ENCODE measurements at regions of chr12 and their contacts with region 1.

Region 1: DNA sequence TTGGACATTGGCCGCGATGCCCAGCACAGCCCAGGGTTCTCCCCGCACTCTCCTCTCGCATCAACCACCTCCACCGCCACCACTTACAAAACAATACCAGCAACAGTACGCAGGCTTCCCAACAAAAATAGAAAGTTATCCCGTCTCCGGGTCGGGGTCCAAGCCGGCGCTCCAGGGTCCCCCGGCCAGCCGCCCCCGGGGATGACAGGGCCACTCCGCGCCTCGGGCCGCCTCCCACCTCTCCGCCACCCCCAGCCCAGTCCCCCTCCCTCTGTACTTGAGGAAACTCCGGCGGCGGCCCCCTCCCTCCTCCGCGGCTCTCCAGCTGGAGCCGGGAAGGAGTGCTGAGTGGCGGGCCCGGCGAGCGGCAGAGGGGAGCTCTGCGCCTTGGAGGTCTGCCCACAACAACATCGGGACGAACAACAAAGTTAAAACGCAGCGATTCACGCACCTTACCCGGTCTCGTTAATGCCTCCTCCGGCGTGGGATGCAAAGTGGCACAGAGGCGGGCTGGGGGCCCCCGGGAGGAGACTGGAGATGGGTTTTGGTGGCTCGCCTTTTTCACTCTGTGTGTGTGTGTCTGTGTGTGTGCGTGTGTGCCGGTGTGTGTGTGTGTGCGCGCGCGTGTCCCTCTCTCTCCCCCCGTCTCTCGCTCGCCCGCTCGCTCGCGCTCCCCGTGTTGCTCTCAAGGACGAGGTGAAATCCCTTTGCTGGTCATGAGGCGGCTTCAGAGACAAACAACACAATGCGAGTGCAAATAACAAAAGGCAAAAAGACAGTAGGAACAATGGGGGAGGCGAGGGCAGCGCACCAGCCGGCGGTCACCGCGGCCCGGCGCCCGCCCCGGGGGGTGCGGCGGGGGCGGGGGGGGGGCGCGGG is 386.8 kb downstream of the BCAT1 start:
- DNase-seq: peak; percentile 46
- ATAC-seq: peak; percentile 55
- H3K4me3 Mint-ChIP-seq: peak overlapping the region; percentile 87
- H3K27ac Mint-ChIP-seq: peak overlapping the region; percentile 76
- H3K4me1 Mint-ChIP-seq: peaks cover 28% of the 10 kb centered on the region
- H3K27me3 Mint-ChIP-seq: peaks cover 23% of the 10 kb centered on the region
- CTCF ChIP-seq: no peak

Region 2: DNA sequence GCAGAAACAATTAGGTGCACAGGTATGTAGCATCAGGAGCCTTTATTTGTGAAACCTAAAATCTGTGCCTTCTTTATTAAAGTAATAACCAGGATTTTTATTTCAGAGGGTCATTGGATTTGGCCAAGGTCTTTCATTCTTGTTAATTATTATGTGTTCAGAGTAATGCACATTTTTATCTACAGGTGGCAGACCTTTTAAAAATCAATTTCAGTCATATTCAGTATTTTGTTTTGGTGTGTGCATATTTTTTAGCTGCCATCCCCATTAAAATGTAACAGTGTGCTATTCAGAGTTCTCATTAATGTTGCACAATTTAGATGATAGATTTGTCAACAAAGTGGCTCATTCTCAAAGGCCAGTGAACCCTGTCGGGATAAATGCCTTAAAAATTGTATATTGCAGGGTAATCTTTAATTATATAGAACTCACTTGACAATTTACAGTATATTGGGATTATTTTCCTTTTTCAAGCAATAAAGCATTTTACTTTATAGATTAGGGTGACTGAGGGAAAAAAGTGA is 293.4 kb before region 1 on chr12:
- CTCF ChIA-PET with region 1: no interaction called
- POLR2A ChIA-PET with region 1: no interaction called
- intact Hi-C with region 1: loop called (anchors 5 kb)
- DNase-seq: no peak
- ATAC-seq: no peak
- H3K4me3 Mint-ChIP-seq: no peak overlapping the region
- H3K27ac Mint-ChIP-seq: no peak overlapping the region
- H3K4me1 Mint-ChIP-seq: no peaks in the 10 kb centered on the region
- H3K27me3 Mint-ChIP-seq: no peaks in the 10 kb centered on the region
- CTCF ChIP-seq: no peak

Region 3: GRCh38 chr12:24360907-24361306 is 201.2 kb before region 1 on chr12:
- CTCF ChIA-PET with region 1: interaction called, 4 read pairs
- POLR2A ChIA-PET with region 1: interaction called, 10 read pairs
- intact Hi-C with region 1: loop called (anchors 5 kb)
- DNase-seq: no peak
- ATAC-seq: peak; percentile 53
- H3K4me3 Mint-ChIP-seq: peak overlapping the region; percentile 69
- H3K27ac Mint-ChIP-seq: peak overlapping the region; percentile 76
- H3K4me1 Mint-ChIP-seq: peaks cover 65% of the 10 kb centered on the region
- H3K27me3 Mint-ChIP-seq: no peaks in the 10 kb centered on the region
- CTCF ChIP-seq: no peak

Region 4: GRCh38 chr12:24414480-24414879 is 147.6 kb before region 1 on chr12:
- CTCF ChIA-PET with region 1: no interaction called
- POLR2A ChIA-PET with region 1: interaction called, 14 read pairs
- intact Hi-C with region 1: loop called (anchors 1 kb)
- DNase-seq: no peak
- ATAC-seq: peak; percentile 36
- H3K4me3 Mint-ChIP-seq: peak overlapping the region; percentile 80
- H3K27ac Mint-ChIP-seq: peak overlapping the region; percentile 89
- H3K4me1 Mint-ChIP-seq: peaks cover 61% of the 10 kb centered on the region
- H3K27me3 Mint-ChIP-seq: no peaks in the 10 kb centered on the region
- CTCF ChIP-seq: no peak

Region 5: DNA sequence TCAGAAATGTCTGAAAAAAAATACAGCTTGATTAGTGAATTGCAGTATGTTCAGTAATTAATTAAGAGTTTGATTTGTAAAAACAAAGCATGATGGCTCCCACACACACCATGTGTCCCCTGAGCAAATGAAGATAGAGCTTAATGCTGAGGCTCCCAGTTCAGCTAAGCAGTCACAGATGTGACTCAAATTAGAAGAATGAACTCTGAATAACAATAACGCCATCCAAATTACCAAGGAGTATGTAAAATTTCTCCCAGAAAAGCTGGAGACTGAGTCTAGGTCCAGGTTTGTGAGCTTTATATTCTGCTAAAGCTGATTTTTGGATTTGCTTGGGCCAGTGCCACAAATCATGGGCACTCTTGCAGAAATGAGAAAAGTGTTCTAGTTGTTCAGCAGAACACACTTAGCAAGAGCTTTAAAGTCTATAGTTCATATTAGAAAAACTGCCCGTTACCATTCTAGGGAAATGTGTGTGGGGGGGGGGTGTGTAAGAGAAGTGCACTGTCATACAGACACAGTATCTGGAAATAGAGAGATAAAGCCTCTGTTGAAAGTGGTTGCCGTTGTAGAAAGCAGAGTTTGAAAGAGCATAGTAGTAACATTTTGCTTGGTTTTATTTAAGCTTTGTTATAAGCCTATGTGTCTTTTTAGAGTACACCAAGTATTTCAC is 133.7 kb after region 1 on chr12:
- CTCF ChIA-PET with region 1: no interaction called
- POLR2A ChIA-PET with region 1: interaction called, 11 read pairs
- intact Hi-C with region 1: no loop called
- DNase-seq: no peak
- ATAC-seq: no peak
- H3K4me3 Mint-ChIP-seq: no peak overlapping the region
- H3K27ac Mint-ChIP-seq: no peak overlapping the region
- H3K4me1 Mint-ChIP-seq: peaks cover 4% of the 10 kb centered on the region
- H3K27me3 Mint-ChIP-seq: no peaks in the 10 kb centered on the region
- CTCF ChIP-seq: no peak

Region 6: GRCh38 chr12:24705741-24706358 is 143.7 kb after region 1 on chr12:
- CTCF ChIA-PET with region 1: no interaction called
- POLR2A ChIA-PET with region 1: interaction called, 5 read pairs
- intact Hi-C with region 1: loop called (anchors 5 kb)
- DNase-seq: no peak
- ATAC-seq: peak; percentile 91
- H3K4me3 Mint-ChIP-seq: peak overlapping the region; percentile 66
- H3K27ac Mint-ChIP-seq: peak overlapping the region; percentile 81
- H3K4me1 Mint-ChIP-seq: peaks cover 51% of the 10 kb centered on the region
- H3K27me3 Mint-ChIP-seq: no peaks in the 10 kb centered on the region
- CTCF ChIP-seq: no peak

Region 7: GRCh38 chr12:24719293-24719721 is 157.2 kb after region 1 on chr12:
- CTCF ChIA-PET with region 1: no interaction called
- POLR2A ChIA-PET with region 1: interaction called, 22 read pairs
- intact Hi-C with region 1: no loop called
- DNase-seq: no peak
- ATAC-seq: peak; percentile 94
- H3K4me3 Mint-ChIP-seq: peak overlapping the region; percentile 64
- H3K27ac Mint-ChIP-seq: peak overlapping the region; percentile 92
- H3K4me1 Mint-ChIP-seq: peaks cover 35% of the 10 kb centered on the region
- H3K27me3 Mint-ChIP-seq: no peaks in the 10 kb centered on the region
- CTCF ChIP-seq: no peak